Heart right ventricle (tissue), 16 donors: ENCODE measurements at regions of chr20 and their contacts with region 1.

Region 1: GRCh38 chr20:25057234-25058050 is 497 bp downstream of the ACSS1 start:
- DNase-seq: peak; percentile 81 to 84
- ATAC-seq: peak; percentile 68 to 84 (median 78)
- H3K4me3 ChIP-seq: peak overlapping the region; percentile 68 to 98 (median 89)
- H3K27ac ChIP-seq: peak overlapping the region; percentile 93 to 99 (median 98)
- H3K4me1 ChIP-seq: peaks cover 25 to 65% (median 59%) of the 10 kb centered on the region in 9 donors
- H3K27me3 ChIP-seq: no peaks in the 10 kb centered on the region
- CTCF ChIP-seq: peak in 2 of 9 donors; percentile 5 to 12

Region 2: GRCh38 chr20:23350196-23350903 is 1707.1 kb before region 1 on chr20 and contains the start of gene NXT1:
- intact Hi-C with region 1: loop called in 1 of 10 experiments (anchors 10 kb)
- DNase-seq: peak; percentile 97 to 98
- ATAC-seq: peak; percentile 93 to 97 (median 96)
- H3K4me3 ChIP-seq: peak within 1 kb of the TSS; percentile 78 to 97 (median 86)
- H3K27ac ChIP-seq: peak within 1 kb of the TSS; percentile 88 to 100 (median 98)
- H3K4me1 ChIP-seq: peaks cover 3 to 29% (median 24%) of the 10 kb centered on the region in 9 donors
- H3K27me3 ChIP-seq: no peaks in the 10 kb centered on the region
- CTCF ChIP-seq: no peak
- total RNA-seq, gene NXT1: 4.5 to 12.9 (median 6.5) TPM

Region 3: DNA sequence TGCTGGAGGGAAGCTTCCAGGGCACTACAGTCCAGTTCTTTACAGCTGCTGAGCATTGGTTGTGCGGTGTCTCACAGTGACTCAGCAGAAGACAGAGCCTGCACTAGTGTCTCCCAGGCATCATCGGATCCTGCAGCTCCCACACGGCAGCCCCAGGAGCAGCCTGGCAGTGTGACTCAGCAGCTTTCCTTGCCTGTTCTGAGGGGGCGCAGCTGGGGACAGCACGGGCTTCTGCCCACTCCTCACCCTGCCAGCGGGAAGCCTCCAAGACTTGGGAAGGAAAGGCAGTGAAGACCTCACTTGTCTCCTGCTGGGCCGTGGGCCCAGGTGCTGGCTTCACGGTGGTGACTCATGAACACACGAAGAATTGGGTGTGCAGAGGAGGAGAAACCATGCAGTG is 422.6 kb before region 1 on chr20:
- intact Hi-C with region 1: no loop called
- DNase-seq: no peak
- ATAC-seq: peak; percentile 38 to 79 (median 66)
- H3K4me3 ChIP-seq: no peak overlapping the region
- H3K27ac ChIP-seq: no peak overlapping the region
- H3K4me1 ChIP-seq: peaks cover 0 to 12% (median 0%) of the 10 kb centered on the region in 9 donors
- H3K27me3 ChIP-seq: no peaks in the 10 kb centered on the region
- CTCF ChIP-seq: no peak

Region 4: GRCh38 chr20:25025986-25026605 is 31.3 kb before region 1 on chr20:
- intact Hi-C with region 1: loop called in 1 of 10 experiments (anchors 5 kb)
- DNase-seq: no peak
- ATAC-seq: peak in 4 of 8 donors; percentile 31 to 50 (median 34)
- H3K4me3 ChIP-seq: no peak overlapping the region
- H3K27ac ChIP-seq: peak overlapping the region in 1 of 10 donors; percentile 31
- H3K4me1 ChIP-seq: peaks cover 0 to 76% (median 32%) of the 10 kb centered on the region in 9 donors
- H3K27me3 ChIP-seq: no peaks in the 10 kb centered on the region
- CTCF ChIP-seq: no peak

Region 5: DNA sequence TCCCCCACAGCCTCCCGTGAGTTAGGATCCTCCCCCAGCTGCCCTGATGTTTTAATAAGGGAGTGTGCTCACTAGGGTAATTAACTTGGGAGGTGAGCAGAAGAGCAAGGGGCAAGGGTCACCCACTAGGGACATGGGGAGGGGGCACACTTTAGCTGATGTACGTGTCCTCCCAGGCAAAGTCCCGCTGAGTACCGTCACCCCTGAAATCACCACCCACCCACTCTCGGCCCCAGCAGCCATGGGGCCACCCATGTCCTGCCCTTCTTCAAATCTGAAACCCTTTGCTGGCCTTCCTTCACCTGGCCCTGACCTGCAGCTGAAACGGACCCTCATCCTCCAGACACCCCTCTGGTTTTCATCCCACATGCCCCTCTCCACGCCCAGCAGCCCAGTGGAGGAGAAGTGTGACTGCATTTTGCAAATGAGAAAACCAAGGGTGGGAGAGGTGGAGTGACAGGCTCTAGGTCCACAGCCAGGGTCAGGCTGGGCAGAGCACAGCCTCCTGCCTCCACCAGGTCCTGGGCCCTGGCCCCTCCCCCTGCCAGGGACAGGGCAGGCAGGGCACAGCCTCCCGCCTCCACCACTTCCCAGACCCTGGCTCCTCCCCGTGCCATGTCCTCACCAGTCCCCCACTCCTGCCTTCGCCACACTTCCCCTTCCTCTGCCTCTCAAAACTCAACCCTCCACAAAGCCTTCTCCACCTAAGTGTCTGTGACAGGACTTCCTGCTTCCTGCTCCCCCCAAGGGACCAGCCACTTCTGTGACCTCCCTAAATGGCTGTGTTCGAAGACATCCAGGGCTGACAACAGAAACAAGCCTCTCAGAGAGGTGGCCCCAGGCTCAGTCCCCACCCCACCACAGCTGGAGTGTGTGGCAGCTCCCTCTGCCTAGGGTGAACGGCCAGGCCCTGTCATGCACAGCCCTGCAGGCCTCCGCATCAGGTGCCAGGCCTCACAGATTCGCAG is 14.6 kb before region 1 on chr20:
- intact Hi-C with region 1: loop called in 2 of 10 experiments (anchors 2 kb)
- DNase-seq: peak; percentile 70 to 76
- ATAC-seq: peak; percentile 35 to 51 (median 41)
- H3K4me3 ChIP-seq: no peak overlapping the region
- H3K27ac ChIP-seq: peak overlapping the region; percentile 77 to 98 (median 90)
- H3K4me1 ChIP-seq: peaks cover 66 to 100% (median 97%) of the 10 kb centered on the region in 9 donors
- H3K27me3 ChIP-seq: no peaks in the 10 kb centered on the region
- CTCF ChIP-seq: no peak

Region 6: GRCh38 chr20:25103572-25104352 is 46.3 kb after region 1 on chr20:
- intact Hi-C with region 1: no loop called
- DNase-seq: no peak
- ATAC-seq: no peak
- H3K4me3 ChIP-seq: no peak overlapping the region
- H3K27ac ChIP-seq: no peak overlapping the region
- H3K4me1 ChIP-seq: peaks cover 0 to 9% (median 0%) of the 10 kb centered on the region in 9 donors
- H3K27me3 ChIP-seq: peaks cover 0 to 23% (median 13%) of the 10 kb centered on the region in 7 donors
- CTCF ChIP-seq: no peak

Region 7: GRCh38 chr20:25195014-25195961 is 137.8 kb after region 1 on chr20 and contains the start of gene ENTPD6:
- intact Hi-C with region 1: loop called in 1 of 10 experiments (anchors 10 kb)
- DNase-seq: peak; percentile 92 to 97
- ATAC-seq: peak; percentile 83 to 93 (median 92)
- H3K4me3 ChIP-seq: peak within 1 kb of the TSS; percentile 75 to 99 (median 92)
- H3K27ac ChIP-seq: peak within 1 kb of the TSS; percentile 84 to 97 (median 93)
- H3K4me1 ChIP-seq: peaks cover 15 to 72% (median 51%) of the 10 kb centered on the region in 9 donors
- H3K27me3 ChIP-seq: no peaks in the 10 kb centered on the region
- CTCF ChIP-seq: peak in 5 of 9 donors; percentile 13 to 51 (median 36)
- total RNA-seq, gene ENTPD6: 54.6 to 141 (median 78.0) TPM

Region 8: DNA sequence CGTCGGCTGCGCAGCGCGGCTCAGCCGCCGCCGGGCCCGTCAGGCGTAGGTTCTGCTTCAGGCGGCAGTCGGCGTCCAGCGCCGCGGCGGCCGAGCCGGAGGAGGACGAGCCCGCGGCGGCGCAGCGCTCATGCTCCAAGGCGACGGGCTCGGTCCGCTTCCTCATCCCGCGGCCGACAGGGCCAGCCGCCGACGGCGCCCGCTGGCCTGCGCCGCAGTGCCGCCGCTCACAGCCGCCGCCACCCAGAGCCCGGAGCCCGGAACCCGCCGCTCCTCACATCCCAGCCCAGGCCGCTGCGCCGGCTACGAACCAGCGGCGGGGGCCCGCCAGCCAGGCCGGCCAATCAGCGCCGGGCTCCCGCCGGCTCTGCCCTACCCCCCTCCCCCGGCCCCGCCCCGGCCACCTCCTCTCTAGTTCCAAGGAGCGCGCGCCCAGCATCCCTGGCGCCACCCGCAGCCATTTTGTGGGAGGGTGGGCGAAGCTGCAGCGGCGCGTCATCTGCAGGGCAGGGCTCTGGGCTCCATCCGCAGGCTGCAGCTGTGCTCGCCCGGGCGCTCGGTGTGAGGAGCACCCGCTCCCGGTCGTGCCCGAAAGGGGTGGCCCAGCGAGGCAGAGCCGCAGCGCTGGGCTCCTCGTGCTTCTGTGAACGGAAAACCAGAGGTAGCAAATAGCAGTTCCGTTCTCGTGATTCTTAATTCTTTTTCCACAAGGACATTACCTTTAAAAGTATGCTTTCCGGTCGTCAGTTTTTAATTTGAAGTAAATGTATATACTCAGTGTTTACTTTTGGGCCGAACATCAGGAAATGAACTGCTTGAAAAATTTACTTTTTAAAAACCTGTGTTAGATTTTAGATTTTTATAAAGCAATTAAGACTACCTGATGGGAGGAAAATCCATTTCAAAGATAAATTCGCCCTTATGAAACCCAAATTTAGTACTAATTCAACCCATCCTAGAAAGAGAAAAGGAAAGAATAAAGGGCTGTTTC is 333.4 kb after region 1 on chr20 and contains the start of gene ABHD12:
- intact Hi-C with region 1: loop called in 4 of 10 experiments (anchors 10 kb)
- DNase-seq: peak; percentile 96 to 97
- ATAC-seq: peak; percentile 98 to 100 (median 99)
- H3K4me3 ChIP-seq: peak within 1 kb of the TSS; percentile 61 to 99 (median 91)
- H3K27ac ChIP-seq: peak within 1 kb of the TSS; percentile 31 to 94 (median 88)
- H3K4me1 ChIP-seq: peaks cover 0 to 20% (median 18%) of the 10 kb centered on the region in 9 donors
- H3K27me3 ChIP-seq: no peaks in the 10 kb centered on the region
- CTCF ChIP-seq: peak in 3 of 9 donors; percentile 12 to 28 (median 15)
- total RNA-seq, gene ABHD12: 21.1 to 41.3 (median 26.9) TPM